Naive thymus-derived CD4-positive, alpha-beta T cell (primary cell): ENCODE measurements at regions of chr19 and their contacts with region 1.

Region 1: DNA sequence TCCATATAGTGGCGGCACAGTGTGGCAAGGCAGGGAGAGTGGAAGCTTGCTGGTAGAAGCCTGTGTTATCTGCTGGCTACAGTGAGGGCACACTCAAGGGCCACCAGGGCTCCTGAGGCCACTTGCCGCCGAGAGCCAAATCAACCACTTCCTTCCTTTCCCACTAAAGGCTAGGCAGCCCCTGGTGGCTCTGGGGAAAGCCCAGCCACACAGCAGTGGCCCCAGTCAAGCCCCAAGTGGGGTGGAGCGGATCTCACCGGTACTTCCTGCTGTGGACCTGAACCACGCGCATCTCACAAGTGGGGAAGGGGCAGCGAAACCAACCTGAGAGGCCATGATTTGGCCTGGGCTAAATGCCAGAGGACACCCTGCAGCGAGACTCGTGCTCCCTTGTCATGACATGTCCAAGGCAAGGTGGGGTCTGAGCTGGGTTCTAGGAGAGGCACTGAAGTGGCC is 21.9 kb upstream of the SLC35E1 start:
- DNase-seq: peak in 3 of 9 donors; percentile 27 to 54 (median 35)
- ATAC-seq: peak; percentile 76
- H3K4me3 ChIP-seq: peak overlapping the region; percentile 22
- H3K4me3 Mint-ChIP-seq: peak overlapping the region; percentile 73 to 93 (median 82)
- H3K27ac ChIP-seq: peak overlapping the region; percentile 65
- H3K27ac Mint-ChIP-seq: peak overlapping the region; percentile 80 to 95 (median 92)
- H3K4me1 ChIP-seq: peaks cover 32 to 34% of the 10 kb centered on the region in 2 donors
- H3K4me1 Mint-ChIP-seq: peaks cover 52 to 86% (median 73%) of the 10 kb centered on the region in 7 donors
- H3K27me3 ChIP-seq: no peaks in the 10 kb centered on the region
- H3K27me3 Mint-ChIP-seq: no peaks in the 10 kb centered on the region

Region 2: DNA sequence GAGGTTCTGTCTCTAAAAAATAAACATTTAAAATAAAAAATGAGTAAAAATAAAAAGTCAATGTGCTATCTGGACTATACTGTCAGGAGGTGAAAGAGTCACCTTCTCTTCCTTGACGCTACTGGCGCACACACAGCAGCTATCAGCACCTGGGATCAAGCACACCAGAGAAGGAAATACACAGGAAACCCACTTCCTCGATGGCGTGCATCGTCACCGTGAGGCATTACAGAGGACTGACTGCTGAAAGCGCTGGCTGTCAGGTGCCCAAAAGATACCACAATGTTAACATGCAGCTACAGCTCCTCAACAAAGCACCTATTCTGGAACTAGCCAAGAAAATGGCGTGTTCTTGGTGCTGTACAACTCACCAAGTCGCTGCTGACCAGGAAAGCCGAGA is 28.0 kb before region 1 on chr19:
- CTCF ChIA-PET with region 1: interaction called, 3 read pairs
- POLR2A ChIA-PET with region 1: interaction called, 6 read pairs
- intact Hi-C with region 1: loop called in 1 of 2 experiments (anchors 1 kb)
- DNase-seq: peak in 8 of 9 donors; percentile 46 to 95 (median 92)
- ATAC-seq: peak; percentile 100
- H3K4me3 ChIP-seq: peak overlapping the region; percentile 17
- H3K4me3 Mint-ChIP-seq: peak overlapping the region; percentile 76 to 97 (median 82)
- H3K27ac ChIP-seq: peak overlapping the region; percentile 81
- H3K27ac Mint-ChIP-seq: peak overlapping the region; percentile 92 to 100 (median 98)
- H3K4me1 ChIP-seq: peaks cover 22 to 24% of the 10 kb centered on the region in 2 donors
- H3K4me1 Mint-ChIP-seq: peaks cover 14 to 63% (median 30%) of the 10 kb centered on the region in 7 donors
- H3K27me3 ChIP-seq: no peaks in the 10 kb centered on the region
- H3K27me3 Mint-ChIP-seq: no peaks in the 10 kb centered on the region

Region 3: DNA sequence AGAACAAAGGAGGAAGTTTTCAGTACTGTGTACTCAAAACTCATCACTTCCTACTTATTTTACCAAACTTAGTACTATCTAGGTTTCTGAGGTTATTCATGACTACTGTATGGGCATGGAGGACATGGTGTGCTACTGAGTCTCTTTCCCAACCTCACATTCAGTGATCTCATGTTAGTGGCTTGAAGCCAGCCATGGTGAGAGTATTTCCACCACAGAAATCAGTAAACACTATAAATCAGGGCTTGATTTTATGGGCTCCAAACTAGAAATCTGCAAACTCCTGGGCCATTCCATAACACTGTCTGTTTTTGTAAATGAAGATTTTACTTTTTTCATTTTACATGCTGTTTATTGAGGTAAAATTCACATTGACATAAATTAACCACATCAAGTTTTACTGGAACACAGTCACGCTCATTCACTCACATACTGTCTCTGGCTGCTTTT is 14.2 kb after region 1 on chr19:
- CTCF ChIA-PET with region 1: no interaction called
- POLR2A ChIA-PET with region 1: interaction called, 3 read pairs
- intact Hi-C with region 1: loop called in 1 of 2 experiments (anchors 2 kb)
- DNase-seq: no peak
- ATAC-seq: peak; percentile 85
- H3K4me3 ChIP-seq: no peak overlapping the region
- H3K4me3 Mint-ChIP-seq: no peak overlapping the region
- H3K27ac ChIP-seq: no peak overlapping the region
- H3K27ac Mint-ChIP-seq: peak overlapping the region in 6 of 9 donors; percentile 4 to 66 (median 15)
- H3K4me1 ChIP-seq: no peaks in the 10 kb centered on the region
- H3K4me1 Mint-ChIP-seq: peaks cover 31 to 69% (median 58%) of the 10 kb centered on the region in 7 donors
- H3K27me3 ChIP-seq: no peaks in the 10 kb centered on the region
- H3K27me3 Mint-ChIP-seq: no peaks in the 10 kb centered on the region